ENCODE measurements at regions of chr12 and their contacts with region 1.

Region 1: DNA sequence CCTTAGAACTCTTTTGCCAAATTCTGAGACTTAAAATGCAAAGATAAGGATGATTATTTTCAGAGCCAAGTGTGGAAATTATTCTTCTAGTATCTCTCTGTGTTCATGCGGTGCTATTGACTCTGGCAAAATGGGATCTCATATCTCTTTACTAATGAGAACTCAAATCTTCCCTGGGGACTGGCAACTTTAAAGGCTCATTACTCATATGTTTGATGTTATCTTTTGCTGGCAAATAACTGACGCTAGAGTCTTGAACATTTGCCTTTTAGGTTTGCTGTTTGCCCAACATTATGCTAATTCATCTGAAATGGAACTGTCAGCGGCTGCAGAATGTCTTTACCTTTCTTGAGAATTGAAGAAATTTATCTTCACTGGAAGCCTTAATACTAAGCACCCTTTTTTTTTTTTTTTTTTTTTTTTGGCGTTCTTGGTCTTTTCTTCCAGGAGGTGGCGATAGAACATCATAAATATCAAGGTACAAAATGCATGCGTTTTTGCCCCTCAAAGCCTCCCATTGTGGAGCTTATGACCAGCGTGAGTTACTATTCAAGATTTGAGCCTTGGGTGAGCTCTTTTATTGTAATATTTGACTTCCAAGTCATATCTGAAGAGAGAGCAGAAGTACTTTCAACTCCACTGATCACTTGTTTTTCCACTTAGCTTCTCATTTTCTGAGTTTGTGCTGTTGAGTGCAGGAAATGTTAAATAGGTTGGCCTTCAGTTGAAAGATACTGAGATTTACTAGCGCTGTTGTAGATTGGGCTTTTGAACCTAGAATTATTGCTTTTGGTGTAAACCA is 86.6 kb downstream of the CAND1 start:
- DNase-seq: peak in 1 of 10 donors; percentile 11

Region 2: GRCh38 chr12:67413578-67413977 is 57.8 kb after region 1 on chr12:
- intact Hi-C with region 1: loop called (anchors 5 kb)
- DNase-seq: no peak

Region 3: DNA sequence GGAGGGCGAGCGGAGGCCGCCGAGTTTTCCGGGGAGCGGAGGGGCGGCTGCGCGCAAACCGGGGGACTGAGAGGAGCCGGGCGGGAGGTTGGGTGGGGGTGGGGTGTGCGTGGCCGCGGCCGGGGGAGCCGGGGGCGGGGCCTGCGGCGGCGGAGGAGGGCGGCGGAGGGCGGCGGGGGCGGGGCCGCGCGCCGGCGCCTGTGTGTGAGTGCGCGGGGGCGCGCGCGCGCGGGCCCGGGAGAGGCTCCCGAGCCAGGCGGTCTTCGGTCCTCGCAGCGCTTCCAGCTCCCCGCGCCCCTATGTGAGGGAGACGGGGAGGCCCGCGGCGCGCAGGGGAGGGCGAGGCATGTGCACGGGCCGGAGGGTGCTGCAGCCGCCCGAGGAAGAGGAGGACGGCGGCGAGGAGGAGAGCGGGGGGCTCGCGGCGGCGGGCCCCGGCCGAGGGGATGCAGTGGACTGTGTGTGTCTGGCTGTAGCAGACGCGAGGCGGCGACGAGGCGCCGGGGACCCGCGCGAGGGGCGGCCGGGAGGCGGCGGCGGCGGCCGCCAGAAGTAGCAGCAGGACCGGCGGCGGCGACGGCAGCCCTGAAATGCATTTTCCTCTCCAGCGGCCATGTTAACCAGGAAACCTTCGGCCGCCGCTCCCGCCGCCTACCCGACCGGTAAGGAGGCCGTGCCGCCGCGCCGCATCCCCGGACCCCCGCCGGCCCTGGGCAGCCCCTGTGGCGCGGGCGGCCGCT is 292.9 kb after region 1 on chr12 and contains the start of gene DYRK2:
- intact Hi-C with region 1: loop called (anchors 10 kb)
- DNase-seq: peak; percentile 51 to 96 (median 67)

Region 4: DNA sequence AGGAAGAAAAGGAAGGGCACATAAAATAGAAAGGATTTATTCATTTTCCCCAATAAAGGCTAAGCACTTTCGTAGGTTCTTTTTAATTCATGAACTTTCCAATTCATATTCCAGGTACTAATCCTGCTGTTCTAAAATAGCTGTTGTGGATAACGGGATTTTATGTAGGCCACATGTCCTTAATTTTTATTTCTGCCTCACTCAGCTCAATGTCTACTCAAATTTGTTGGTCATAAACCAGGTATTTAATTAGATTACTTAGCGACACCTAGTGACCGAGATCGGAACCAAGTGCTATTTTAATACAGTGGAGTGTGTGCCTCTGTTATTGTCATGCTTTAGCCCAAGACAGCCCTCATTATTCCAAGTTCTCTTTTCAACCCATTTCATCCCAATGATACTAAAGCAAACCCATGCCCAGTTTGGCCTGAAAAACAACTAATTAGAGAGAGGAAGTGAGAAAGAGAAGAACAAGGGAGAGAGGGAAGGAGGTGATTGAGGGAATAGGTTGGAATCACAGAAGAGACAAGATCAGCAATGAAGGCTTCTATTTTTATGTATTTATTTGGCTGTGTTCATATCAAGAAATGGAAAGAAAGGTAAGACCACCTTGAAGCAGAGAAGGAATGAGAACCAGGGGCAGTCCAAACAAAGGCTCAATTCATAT is 587.6 kb after region 1 on chr12:
- intact Hi-C with region 1: loop called (anchors 1 kb)
- DNase-seq: peak in 5 of 10 donors; percentile 14 to 57 (median 34)